ENCODE measurements at regions of chr6 and their contacts with region 1.

Region 1: GRCh38 chr6:30616811-30617564 is at the start of gene PPP1R10:
- DNase-seq: peak; percentile 99
- H3K4me3 Mint-ChIP-seq: peak within 1 kb of the TSS; percentile 87
- H3K27ac Mint-ChIP-seq: peak within 1 kb of the TSS; percentile 95
- H3K4me1 Mint-ChIP-seq: peaks cover 37% of the 10 kb centered on the region
- H3K27me3 Mint-ChIP-seq: no peaks in the 10 kb centered on the region
- total RNA-seq, gene PPP1R10: 47.1 to 49.1 TPM

Region 2: GRCh38 chr6:30344868-30345671 is 271.9 kb before region 1 on chr6 and contains the start of gene RPP21:
- CTCF ChIA-PET with region 1: no interaction called
- intact Hi-C with region 1: loop called (anchors 1 kb)
- DNase-seq: peak; percentile 94
- H3K4me3 Mint-ChIP-seq: peak within 1 kb of the TSS; percentile 87
- H3K27ac Mint-ChIP-seq: peak within 1 kb of the TSS; percentile 86
- H3K4me1 Mint-ChIP-seq: peaks cover 38% of the 10 kb centered on the region
- H3K27me3 Mint-ChIP-seq: no peaks in the 10 kb centered on the region
- total RNA-seq, gene RPP21: 44.8 to 45.0 TPM

Region 3: GRCh38 chr6:30556066-30556905 is 60.7 kb before region 1 on chr6 and contains the start of gene GNL1:
- CTCF ChIA-PET with region 1: no interaction called
- intact Hi-C with region 1: loop called (anchors 1 kb)
- DNase-seq: peak; percentile 100
- H3K4me3 Mint-ChIP-seq: peak within 1 kb of the TSS; percentile 99
- H3K27ac Mint-ChIP-seq: peak within 1 kb of the TSS; percentile 100
- H3K4me1 Mint-ChIP-seq: peaks cover 38% of the 10 kb centered on the region
- H3K27me3 Mint-ChIP-seq: no peaks in the 10 kb centered on the region
- total RNA-seq, gene GNL1: 78.2 to 82.1 TPM

Region 4: GRCh38 chr6:30578051-30578450 is 38.9 kb before region 1 on chr6:
- CTCF ChIA-PET with region 1: no interaction called
- intact Hi-C with region 1: no loop called
- DNase-seq: no peak
- H3K4me3 Mint-ChIP-seq: no peak overlapping the region
- H3K27ac Mint-ChIP-seq: peak overlapping the region; percentile 35
- H3K4me1 Mint-ChIP-seq: peaks cover 37% of the 10 kb centered on the region
- H3K27me3 Mint-ChIP-seq: no peaks in the 10 kb centered on the region

Region 5: GRCh38 chr6:30672445-30673253 is 55.7 kb after region 1 on chr6 and contains the start of gene DHX16:
- CTCF ChIA-PET with region 1: interaction called, 8 read pairs
- intact Hi-C with region 1: loop called (anchors 1 kb)
- DNase-seq: peak; percentile 94
- H3K4me3 Mint-ChIP-seq: peak within 1 kb of the TSS; percentile 80
- H3K27ac Mint-ChIP-seq: peak within 1 kb of the TSS; percentile 80
- H3K4me1 Mint-ChIP-seq: peaks cover 26% of the 10 kb centered on the region
- H3K27me3 Mint-ChIP-seq: no peaks in the 10 kb centered on the region
- total RNA-seq, gene DHX16: 25.7 to 27.7 TPM

Region 6: GRCh38 chr6:30703821-30704360 is 86.9 kb after region 1 on chr6:
- CTCF ChIA-PET with region 1: no interaction called
- intact Hi-C with region 1: no loop called
- DNase-seq: no peak
- H3K4me3 Mint-ChIP-seq: no peak overlapping the region
- H3K27ac Mint-ChIP-seq: no peak overlapping the region
- H3K4me1 Mint-ChIP-seq: no peaks in the 10 kb centered on the region
- H3K27me3 Mint-ChIP-seq: no peaks in the 10 kb centered on the region

Region 7: DNA sequence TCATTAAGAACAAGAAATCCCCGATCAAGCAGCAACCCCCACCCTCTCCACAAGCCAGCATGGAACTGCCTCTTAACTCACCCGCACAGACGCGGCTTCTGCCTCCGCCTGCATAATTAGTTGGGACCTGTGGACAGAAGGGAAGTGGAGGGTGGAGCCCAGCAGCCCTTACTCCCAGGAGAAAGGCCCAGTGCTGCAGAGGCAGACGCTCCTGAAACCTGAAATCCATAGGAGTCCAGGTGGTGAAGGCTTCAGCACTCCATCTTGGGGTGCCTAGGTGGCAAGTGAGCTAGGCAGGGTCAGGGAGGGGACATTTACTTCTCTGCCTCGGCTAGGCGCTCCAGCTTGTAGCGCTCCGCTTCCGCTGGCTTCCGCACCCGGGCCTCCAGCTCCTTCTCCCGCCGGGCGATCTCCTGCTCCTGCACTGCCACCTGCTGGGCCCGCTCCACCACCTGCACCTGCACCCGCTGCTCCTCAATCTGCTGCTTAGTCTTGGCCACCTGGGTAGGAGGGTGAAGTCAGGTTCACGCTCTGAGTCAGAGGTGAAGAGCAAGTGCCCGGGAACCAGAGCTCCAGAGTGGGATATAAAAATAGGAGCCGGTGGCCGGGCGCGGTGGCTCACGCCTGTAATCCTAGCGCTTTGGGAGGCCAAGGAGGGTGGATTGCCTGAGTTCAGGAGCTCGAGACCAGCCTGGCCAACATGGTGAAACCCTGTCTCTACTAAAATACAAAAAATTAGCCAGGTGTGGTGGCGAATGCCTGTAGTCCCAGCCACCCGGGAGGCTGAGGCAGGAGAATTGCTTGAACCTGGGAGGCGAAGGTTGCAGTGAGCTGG is 113.8 kb after region 1 on chr6:
- CTCF ChIA-PET with region 1: interaction called, 22 read pairs
- intact Hi-C with region 1: no loop called
- DNase-seq: peak; percentile 94
- H3K4me3 Mint-ChIP-seq: peak overlapping the region; percentile 29
- H3K27ac Mint-ChIP-seq: no peak overlapping the region
- H3K4me1 Mint-ChIP-seq: peaks cover 47% of the 10 kb centered on the region
- H3K27me3 Mint-ChIP-seq: no peaks in the 10 kb centered on the region

Region 8: DNA sequence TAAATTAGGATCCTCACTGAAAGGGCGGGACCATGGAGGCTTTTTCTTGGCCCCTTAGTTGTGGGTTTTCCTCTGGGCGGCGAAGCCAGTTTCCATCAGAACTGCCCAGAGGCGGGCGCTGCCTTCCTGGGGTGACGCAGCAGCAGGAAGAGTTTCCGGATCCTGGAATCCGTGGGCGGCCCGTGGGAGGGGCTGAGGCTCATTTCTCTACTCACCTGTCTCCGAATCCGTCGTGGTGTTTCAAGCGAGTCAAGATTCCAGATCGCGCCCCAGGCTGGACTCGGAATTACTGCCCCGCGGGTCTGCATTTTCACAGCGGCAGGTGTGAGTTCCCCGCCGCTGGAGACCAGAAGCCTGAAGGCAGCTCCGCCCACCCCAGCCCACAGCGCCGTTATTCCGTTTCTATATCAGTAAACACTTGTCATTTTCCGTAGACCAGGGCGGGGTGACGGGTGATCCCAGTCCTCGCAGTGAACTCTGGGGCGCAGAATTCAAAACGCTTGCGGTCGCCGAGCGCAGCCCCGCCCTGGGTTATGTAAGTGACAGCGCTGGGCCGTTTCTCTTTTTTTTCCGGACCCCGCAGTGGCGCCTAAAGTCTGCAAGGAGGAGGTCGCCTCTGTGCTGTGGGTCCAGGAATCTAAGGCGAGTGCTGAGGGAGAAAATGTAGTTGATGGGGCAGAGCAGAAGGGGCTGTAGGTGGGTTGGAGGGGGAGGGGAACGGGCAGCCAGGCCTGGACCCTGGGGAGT is 580.7 kb after region 1 on chr6:
- CTCF ChIA-PET with region 1: no interaction called
- intact Hi-C with region 1: loop called (anchors 1 kb)
- DNase-seq: peak; percentile 98
- H3K4me3 Mint-ChIP-seq: peak overlapping the region; percentile 83
- H3K27ac Mint-ChIP-seq: peak overlapping the region; percentile 97
- H3K4me1 Mint-ChIP-seq: peaks cover 57% of the 10 kb centered on the region
- H3K27me3 Mint-ChIP-seq: no peaks in the 10 kb centered on the region